ENCODE measurements at regions of chr9 and their contacts with region 1.

Region 1: DNA sequence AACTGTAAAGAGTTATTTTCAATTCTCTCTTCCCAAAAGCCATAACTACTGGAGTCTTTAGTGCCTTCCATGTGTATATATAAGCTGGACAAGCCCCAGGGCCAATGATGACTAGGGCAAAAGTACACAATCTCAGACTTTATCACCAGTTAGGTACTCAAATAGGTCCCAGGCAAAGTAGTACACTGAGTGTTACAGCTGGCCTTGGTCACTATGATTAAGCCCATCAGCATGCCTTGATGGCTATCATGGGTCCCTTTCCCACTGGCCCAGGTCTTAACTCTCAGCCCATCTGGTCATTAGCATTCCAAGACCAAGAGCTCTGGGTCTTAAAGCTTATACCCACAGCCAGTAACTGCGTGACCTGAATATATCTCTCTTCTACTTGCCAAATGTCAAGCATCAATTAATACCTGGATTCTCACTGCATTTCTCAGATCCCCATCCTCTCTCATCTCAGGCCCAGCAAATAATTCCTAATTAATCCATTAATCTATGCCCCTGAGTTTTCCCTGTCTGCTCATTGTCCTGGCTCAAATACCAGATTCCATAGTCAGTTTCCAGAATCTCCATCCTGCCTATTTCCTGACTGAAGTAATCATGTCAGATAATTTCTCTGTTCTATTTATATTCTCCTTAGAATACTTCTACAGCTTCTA is 62.3 kb downstream of the NR6A1 start:
- DNase-seq: peak in 1 of 2 experiments; percentile 48
- H3K4me3 ChIP-seq: no peak overlapping the region
- H3K4me3 Mint-ChIP-seq: no peak overlapping the region
- H3K27ac Mint-ChIP-seq: no peak overlapping the region
- H3K4me1 ChIP-seq: peaks cover 14% of the 10 kb centered on the region; the same call in 1 of the 2 replicates
- H3K4me1 Mint-ChIP-seq: peaks cover 41% of the 10 kb centered on the region
- H3K27me3 ChIP-seq: no peaks in the 10 kb centered on the region
- H3K27me3 Mint-ChIP-seq: no peaks in the 10 kb centered on the region
- CTCF ChIP-seq: no peak

Region 2: GRCh38 chr9:124551472-124552272 is 157.1 kb before region 1 on chr9:
- CTCF ChIA-PET with region 1: interaction called, 16 read pairs
- POLR2A ChIA-PET with region 1: no interaction called
- intact Hi-C with region 1: loop called (anchors 1 kb)
- DNase-seq: peak; percentile 70 to 77
- H3K4me3 ChIP-seq: no peak overlapping the region
- H3K4me3 Mint-ChIP-seq: no peak overlapping the region
- H3K27ac Mint-ChIP-seq: no peak overlapping the region
- H3K4me1 ChIP-seq: peaks cover 9% of the 10 kb centered on the region; the same call in 1 of the 2 replicates
- H3K4me1 Mint-ChIP-seq: no peaks in the 10 kb centered on the region
- H3K27me3 ChIP-seq: no peaks in the 10 kb centered on the region
- H3K27me3 Mint-ChIP-seq: no peaks in the 10 kb centered on the region
- CTCF ChIP-seq: peak; percentile 69 to 78

Region 3: DNA sequence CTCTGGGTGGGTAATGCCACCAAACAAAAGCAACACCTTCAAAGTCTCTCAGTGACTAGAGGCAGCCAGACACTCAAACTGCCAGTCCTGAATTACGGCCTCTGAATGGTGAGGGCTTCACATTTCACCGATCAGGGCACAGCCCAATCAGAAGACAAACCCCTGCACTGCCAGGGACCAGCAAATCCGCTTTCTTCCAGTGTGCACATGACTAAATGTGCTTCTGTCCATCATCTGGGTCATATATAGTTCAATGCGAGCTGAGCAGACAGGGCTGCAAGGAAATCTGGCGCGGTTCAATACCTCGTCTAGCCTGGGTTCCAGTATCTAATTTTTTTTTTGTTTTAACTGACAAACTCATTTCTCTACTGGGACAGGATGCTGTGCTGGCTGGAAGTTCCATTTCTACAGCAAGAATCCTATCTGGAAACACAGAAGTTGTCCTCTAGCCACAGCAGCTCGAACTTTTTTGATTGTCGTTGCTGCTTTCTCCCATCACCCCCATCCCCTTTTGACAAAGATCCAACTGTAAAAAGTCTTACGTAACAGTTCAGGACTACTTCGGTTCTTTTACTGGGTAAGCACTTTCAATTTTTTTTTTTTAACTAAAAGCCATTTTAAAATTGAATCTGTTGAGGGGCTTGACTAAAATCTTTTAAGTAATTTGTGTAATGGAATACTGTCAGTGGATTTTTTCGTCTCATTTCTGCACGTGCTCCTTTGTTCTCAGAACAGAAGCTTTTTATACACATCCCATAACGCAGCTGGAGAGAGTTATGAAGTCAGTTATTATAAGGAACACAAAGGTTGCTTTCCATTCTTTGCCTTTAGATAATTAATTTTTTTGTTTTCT is 50.4 kb before region 1 on chr9:
- CTCF ChIA-PET with region 1: interaction called, 3 read pairs
- POLR2A ChIA-PET with region 1: no interaction called
- intact Hi-C with region 1: loop called (anchors 1 kb)
- DNase-seq: peak; percentile 76 to 85
- H3K4me3 ChIP-seq: peak overlapping the region; percentile 49
- H3K4me3 Mint-ChIP-seq: peak overlapping the region; percentile 98
- H3K27ac Mint-ChIP-seq: peak overlapping the region; percentile 100
- H3K4me1 ChIP-seq: peaks cover 37% of the 10 kb centered on the region
- H3K4me1 Mint-ChIP-seq: peaks cover 7% of the 10 kb centered on the region
- H3K27me3 ChIP-seq: no peaks in the 10 kb centered on the region
- H3K27me3 Mint-ChIP-seq: no peaks in the 10 kb centered on the region
- CTCF ChIP-seq: no peak

Region 4: GRCh38 chr9:124754289-124754688 is 45.5 kb after region 1 on chr9:
- CTCF ChIA-PET with region 1: no interaction called
- POLR2A ChIA-PET with region 1: no interaction called
- intact Hi-C with region 1: loop called (anchors 1 kb)
- DNase-seq: peak in 1 of 2 experiments; percentile 38
- H3K4me3 ChIP-seq: no peak overlapping the region
- H3K4me3 Mint-ChIP-seq: no peak overlapping the region
- H3K27ac Mint-ChIP-seq: no peak overlapping the region
- H3K4me1 ChIP-seq: peaks cover 21% of the 10 kb centered on the region; the same call in 1 of the 2 replicates
- H3K4me1 Mint-ChIP-seq: peaks cover 41% of the 10 kb centered on the region
- H3K27me3 ChIP-seq: no peaks in the 10 kb centered on the region
- H3K27me3 Mint-ChIP-seq: no peaks in the 10 kb centered on the region
- CTCF ChIP-seq: peak; percentile 49 to 51

Region 5: GRCh38 chr9:124764774-124765438 is 56.1 kb after region 1 on chr9:
- CTCF ChIA-PET with region 1: interaction called, 12 read pairs
- POLR2A ChIA-PET with region 1: no interaction called
- intact Hi-C with region 1: no loop called
- DNase-seq: no peak
- H3K4me3 ChIP-seq: no peak overlapping the region
- H3K4me3 Mint-ChIP-seq: no peak overlapping the region
- H3K27ac Mint-ChIP-seq: no peak overlapping the region
- H3K4me1 ChIP-seq: no peaks in the 10 kb centered on the region
- H3K4me1 Mint-ChIP-seq: peaks cover 9% of the 10 kb centered on the region
- H3K27me3 ChIP-seq: no peaks in the 10 kb centered on the region
- H3K27me3 Mint-ChIP-seq: no peaks in the 10 kb centered on the region
- CTCF ChIP-seq: peak in 1 of 2 experiments; percentile 36

Region 6: DNA sequence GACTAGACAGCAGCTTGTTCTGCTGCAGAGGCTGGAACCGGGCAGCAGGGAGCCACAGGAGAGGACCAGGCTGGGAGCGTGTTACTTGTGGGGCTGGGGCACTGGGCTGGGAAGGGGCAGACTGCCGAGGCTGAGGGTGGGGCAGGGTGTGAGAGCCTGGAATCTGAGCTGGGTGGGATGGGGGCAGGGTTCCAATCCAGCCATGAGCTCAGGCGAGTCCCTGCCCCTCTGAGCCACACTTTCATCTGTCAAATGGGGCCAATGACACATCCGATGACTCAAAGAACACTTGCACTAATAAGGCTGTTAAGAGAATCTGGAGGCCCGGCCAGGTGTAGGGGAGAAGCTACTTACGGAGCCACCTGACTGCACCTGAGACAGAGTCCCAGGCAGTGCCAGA is 125.8 kb after region 1 on chr9:
- CTCF ChIA-PET with region 1: no interaction called
- POLR2A ChIA-PET with region 1: no interaction called
- intact Hi-C with region 1: no loop called
- DNase-seq: no peak
- H3K4me3 ChIP-seq: no peak overlapping the region
- H3K4me3 Mint-ChIP-seq: no peak overlapping the region
- H3K27ac Mint-ChIP-seq: no peak overlapping the region
- H3K4me1 ChIP-seq: peaks cover 8% of the 10 kb centered on the region; the same call in 1 of the 2 replicates
- H3K4me1 Mint-ChIP-seq: no peaks in the 10 kb centered on the region
- H3K27me3 ChIP-seq: no peaks in the 10 kb centered on the region
- H3K27me3 Mint-ChIP-seq: no peaks in the 10 kb centered on the region
- CTCF ChIP-seq: no peak

Measured in Caco-2 (cell line).